ENCODE measurements at regions of chr15 and their contacts with region 1.

Region 1: DNA sequence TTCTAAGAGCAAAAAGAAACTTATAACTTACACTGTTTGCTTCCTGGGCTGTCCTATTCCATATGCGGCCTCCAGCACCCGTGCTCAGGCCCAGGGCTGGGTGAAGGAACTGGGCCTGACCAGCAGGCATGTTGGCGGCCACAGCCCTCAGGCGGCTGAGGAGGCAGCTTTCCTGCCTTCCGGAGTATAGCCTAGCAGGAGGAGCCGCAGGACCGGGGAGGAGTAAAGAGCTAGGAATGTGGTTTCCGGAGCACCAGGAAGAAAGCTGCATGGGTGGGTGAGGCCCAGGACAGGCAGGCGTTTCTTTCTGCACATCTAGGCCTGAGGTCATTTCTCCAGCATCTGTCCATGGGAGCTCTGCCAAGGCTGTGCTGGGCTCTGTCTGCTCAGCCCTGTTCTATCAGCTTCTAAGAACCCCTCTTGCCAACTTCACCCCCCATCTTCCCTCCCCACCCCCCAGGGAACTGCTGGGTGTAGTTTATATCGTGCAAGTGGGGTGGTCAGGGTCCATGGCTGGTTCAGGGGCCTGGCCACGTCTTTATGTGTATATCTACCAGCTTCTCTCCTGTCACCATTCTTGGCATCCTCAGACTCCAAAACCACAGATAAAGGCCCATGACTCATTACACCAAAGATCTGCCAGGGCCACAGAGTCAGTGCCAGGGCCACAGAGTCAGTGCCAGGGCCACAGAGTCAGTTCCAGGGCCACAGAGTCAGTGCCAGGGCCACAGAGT is 7.8 kb upstream of the KIF7 start:
- DNase-seq: peak; percentile 86 to 91
- H3K4me3 ChIP-seq: peak overlapping the region; percentile 55
- H3K27ac ChIP-seq: peak overlapping the region; percentile 82
- H3K4me1 ChIP-seq: peaks cover 26% of the 10 kb centered on the region
- H3K27me3 ChIP-seq: no peaks in the 10 kb centered on the region
- CTCF ChIP-seq: no peak

Region 2: GRCh38 chr15:89442671-89443307 is 220.3 kb before region 1 on chr15:
- CTCF ChIA-PET with region 1: no interaction called
- POLR2A ChIA-PET with region 1: no interaction called
- intact Hi-C with region 1: no loop called
- DNase-seq: peak in 1 of 2 experiments; percentile 56
- H3K4me3 ChIP-seq: no peak overlapping the region
- H3K27ac ChIP-seq: no peak overlapping the region
- H3K4me1 ChIP-seq: no peaks in the 10 kb centered on the region
- H3K27me3 ChIP-seq: peaks cover 28% of the 10 kb centered on the region
- CTCF ChIP-seq: peak; percentile 84

Region 3: DNA sequence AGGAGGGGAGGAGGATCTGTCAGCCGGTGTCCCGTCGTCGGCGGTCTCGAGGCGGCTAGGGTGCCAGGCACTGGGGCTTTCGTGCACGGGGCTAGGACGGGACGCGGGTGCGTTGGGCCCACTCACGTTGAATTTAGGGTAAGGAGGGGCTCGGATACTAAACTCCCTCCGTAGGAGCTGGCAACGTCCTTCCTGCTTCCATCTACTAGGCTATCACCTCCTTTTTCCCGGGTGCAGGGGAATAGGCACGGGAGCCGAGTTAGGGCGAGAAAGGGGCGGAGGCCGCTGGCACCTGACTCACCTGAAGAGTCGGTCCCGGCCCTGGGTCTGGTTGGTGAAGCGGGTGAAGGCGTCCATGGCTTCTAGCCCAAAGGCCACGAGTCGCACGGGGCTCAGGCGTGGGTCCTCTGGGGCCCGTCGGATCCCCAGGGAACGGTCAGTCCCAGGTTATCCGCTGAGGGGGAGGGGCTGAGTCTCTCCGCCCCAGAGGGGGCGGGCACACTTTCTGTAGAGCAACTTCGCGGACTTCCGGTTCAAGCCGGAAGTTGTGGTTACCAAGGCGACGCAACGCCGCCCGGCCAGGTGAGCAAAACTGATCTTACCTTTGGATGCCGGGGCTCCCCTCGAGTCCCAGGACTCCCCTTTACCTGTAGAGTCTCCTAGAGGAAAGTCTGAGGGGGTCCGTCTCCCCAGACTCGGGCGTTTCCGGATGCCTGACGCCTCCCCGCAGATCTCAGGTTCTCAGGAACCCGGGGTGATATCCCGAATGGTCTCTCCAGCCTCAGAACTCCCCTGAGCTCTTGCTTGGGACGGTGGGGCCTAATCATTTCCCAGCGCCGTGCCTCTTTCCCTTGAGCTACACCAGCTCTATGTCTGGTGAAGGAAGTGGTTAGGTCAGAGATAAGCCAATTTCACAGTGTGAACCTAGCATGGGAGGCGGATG is 27.5 kb after region 1 on chr15 and contains the starts of genes PEX11A and WDR93:
- CTCF ChIA-PET with region 1: no interaction called
- POLR2A ChIA-PET with region 1: no interaction called
- intact Hi-C with region 1: loop called (anchors 1 kb)
- DNase-seq: peak; percentile 75 to 84
- H3K4me3 ChIP-seq: peak within 1 kb of the TSS; percentile 82
- H3K27ac ChIP-seq: 0 out of 2 replicates have a peak within 1 kb of the TSS, but pooled peaks have one; percentile 24
- H3K4me1 ChIP-seq: peaks cover 36% of the 10 kb centered on the region
- H3K27me3 ChIP-seq: no peaks in the 10 kb centered on the region
- CTCF ChIP-seq: no peak
- total RNA-seq, gene PEX11A: 11.7 and 12.8 TPM in 2 replicates
- total RNA-seq, gene WDR93: 1.1 and 1.8 TPM in 2 replicates

Measured in PC-9 (cell line).